Activated CD4-positive, alpha-beta memory T cell treated with anti-CD3 and anti-CD28 coated beads, Interleukin-2, amount 10 ng/mL, durations not matched to agents 7 days and 5 days (primary cell): ENCODE measurements at regions of chr10 and their contacts with region 1.

Region 1: DNA sequence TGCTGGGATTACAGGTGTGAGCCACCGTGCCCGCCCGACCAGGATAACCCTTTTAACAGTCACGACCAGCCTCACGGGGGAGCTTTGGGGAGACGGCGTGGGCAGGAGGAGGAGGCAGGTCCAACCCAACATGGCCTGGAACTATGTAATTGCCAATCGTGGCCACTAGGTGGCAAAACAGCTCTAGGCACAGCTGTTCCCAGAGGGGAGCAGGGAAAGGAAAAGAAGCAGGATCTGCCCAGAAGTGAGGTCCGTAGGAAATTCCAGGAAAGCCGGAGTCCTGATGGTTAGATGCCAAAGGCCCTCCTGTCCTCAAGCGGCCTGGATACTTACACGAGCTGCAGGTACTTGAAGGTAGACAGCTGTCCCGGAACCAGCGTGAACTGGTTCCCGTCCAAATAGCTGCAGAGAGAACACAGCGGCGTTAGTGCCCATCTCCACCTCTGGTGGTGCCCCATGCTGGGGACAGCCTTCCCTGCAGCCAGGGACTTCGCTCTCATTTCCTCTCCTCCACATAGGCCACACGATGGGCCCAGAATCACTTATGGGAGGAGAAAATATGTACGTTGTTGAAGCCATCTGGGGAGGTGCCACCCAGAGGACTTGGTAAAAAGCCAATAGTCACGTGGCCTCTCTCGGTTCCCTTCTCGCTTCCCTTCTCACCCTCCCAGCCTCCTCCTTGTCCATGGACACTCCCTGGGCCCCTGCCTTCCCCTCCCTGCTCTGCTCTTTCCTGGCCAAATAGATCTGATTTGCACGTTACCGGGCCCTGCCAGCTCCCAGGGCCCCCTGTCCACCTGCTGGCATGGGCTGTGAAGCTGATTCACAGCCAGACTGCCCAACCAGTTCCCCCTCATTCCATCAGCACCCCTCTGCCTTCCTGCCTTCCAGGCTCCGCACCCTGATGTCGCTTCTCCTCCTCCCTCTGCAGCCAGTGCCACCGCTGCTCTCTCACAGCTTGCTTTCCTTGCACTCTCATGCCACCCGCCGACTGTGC is 148.1 kb downstream of the SLIT1 start:
- DNase-seq: peak; percentile 66
- H3K4me3 Mint-ChIP-seq: peak overlapping the region; percentile 29
- H3K27ac Mint-ChIP-seq: no peak overlapping the region
- H3K4me1 Mint-ChIP-seq: peaks cover 9% of the 10 kb centered on the region
- H3K27me3 Mint-ChIP-seq: peaks cover 6% of the 10 kb centered on the region

Region 2: GRCh38 chr10:96639899-96640298 is 397.8 kb before region 1 on chr10:
- CTCF ChIA-PET with region 1: interaction called, 12 read pairs
- POLR2A ChIA-PET with region 1: no interaction called
- DNase-seq: no peak
- H3K4me3 Mint-ChIP-seq: no peak overlapping the region
- H3K27ac Mint-ChIP-seq: no peak overlapping the region
- H3K4me1 Mint-ChIP-seq: peaks cover 2% of the 10 kb centered on the region
- H3K27me3 Mint-ChIP-seq: no peaks in the 10 kb centered on the region

Region 3: DNA sequence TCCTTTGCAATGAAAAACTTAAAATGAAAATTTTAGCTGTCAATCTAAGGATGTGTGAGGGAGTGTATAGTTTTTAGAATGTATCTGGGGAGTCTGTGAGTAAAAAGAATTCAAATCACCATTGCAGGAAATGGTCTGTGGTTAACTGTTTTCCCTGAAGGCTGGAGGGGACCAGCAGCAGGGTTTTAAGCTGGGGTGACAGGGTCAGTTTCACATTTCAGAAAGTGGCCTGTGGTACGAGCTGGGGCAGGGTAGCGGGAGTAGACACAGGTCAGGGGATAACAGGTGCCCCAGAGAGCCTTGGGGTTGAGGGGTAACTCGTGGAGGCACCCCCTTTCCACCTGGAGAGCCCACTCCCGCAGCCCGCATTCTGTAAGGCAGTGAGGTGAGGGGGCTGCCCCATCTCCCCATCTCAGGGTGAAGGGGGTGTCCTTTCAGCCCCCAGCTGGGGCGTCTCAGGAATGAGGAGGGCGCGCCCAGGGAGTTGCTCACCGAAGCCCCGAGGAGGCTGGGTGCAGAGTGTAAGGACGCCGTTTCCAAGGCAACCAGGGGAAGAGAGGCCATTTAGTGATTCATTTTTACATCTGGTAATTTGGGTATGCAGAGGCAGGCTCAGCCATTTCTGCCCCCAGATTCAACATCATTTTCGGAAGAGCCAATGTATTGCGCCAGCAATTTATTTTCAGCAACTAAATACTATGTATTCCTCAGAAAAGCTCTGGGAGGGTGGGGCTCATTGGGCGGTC is 20.8 kb before region 1 on chr10:
- CTCF ChIA-PET with region 1: interaction called, 12 read pairs
- POLR2A ChIA-PET with region 1: no interaction called
- DNase-seq: peak; percentile 45
- H3K4me3 Mint-ChIP-seq: peak overlapping the region; percentile 55
- H3K27ac Mint-ChIP-seq: peak overlapping the region; percentile 75
- H3K4me1 Mint-ChIP-seq: peaks cover 23% of the 10 kb centered on the region
- H3K27me3 Mint-ChIP-seq: peaks cover 2% of the 10 kb centered on the region

Region 4: DNA sequence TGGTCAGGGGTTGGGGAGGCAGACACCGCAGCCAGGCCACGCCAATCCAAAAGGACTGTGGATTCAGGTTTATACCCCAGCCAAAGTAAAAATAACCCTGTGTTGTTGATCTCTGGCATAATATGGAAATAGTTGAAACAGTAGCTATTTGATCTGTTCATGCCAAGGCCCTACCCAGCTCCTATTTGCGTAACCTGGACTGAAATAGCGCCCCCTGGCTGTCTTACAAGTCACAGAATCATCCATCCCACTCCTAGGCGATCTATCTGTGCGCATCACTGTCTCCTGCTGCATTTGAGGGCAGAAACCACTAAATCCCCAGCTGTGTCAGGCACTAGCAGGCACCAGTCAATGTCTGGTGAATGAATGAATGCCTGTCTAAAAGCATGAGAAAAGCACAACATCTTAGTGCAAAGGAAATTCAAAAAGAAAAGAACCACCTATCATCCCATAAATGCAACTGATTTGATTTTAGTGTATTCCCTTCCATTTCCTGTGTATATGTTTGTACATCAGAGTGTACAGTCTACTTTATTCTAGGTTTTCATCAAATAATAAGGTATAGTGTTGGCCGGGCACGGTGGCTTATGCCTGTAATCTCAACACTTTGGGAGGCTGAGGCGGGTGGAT is 11.9 kb before region 1 on chr10:
- CTCF ChIA-PET with region 1: interaction called, 67 read pairs
- POLR2A ChIA-PET with region 1: no interaction called
- DNase-seq: peak; percentile 61
- H3K4me3 Mint-ChIP-seq: no peak overlapping the region
- H3K27ac Mint-ChIP-seq: no peak overlapping the region
- H3K4me1 Mint-ChIP-seq: peaks cover 6% of the 10 kb centered on the region
- H3K27me3 Mint-ChIP-seq: peaks cover 14% of the 10 kb centered on the region

Region 5: DNA sequence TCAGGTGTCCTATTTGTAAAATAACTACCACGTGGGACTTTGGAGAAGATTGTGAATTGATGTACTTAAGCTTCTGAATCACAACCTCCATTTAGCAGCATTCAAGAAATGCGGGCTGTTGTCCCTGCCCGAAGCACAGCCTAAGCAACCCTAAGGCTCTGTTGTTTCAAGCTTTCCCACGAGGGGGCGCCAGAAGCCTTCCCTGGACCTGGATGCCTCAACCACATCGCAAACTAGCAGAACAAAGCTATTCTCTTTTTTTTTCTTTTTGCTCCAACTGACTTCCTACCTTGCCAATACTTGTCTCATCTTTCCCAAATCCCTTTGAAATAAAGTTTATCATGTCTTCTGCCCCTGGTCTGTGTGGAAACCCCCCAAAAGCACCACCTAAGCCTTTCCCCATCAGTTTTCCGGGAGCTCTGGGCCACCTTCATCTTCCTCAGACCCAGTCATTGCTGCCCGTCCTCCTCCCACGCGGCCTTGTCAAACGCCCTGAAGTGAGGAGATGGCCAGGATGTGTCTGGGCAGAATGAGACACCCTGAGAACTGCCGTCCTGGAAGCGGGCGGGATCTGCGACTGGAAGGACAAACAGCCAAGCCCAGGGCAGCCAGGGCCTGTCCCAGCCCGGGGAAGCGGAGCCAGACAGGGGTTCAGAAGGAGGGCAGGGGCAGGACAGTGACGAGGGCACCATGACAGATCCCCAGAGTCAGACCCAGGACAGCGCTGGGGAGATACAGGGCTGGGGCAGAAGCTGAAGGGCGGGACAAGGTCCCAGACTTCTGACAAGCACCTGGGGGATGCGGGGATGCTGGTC is 35.4 kb after region 1 on chr10:
- CTCF ChIA-PET with region 1: interaction called, 16 read pairs
- POLR2A ChIA-PET with region 1: no interaction called
- DNase-seq: peak; percentile 81
- H3K4me3 Mint-ChIP-seq: no peak overlapping the region
- H3K27ac Mint-ChIP-seq: no peak overlapping the region
- H3K4me1 Mint-ChIP-seq: peaks cover 18% of the 10 kb centered on the region
- H3K27me3 Mint-ChIP-seq: peaks cover 14% of the 10 kb centered on the region

Region 6: DNA sequence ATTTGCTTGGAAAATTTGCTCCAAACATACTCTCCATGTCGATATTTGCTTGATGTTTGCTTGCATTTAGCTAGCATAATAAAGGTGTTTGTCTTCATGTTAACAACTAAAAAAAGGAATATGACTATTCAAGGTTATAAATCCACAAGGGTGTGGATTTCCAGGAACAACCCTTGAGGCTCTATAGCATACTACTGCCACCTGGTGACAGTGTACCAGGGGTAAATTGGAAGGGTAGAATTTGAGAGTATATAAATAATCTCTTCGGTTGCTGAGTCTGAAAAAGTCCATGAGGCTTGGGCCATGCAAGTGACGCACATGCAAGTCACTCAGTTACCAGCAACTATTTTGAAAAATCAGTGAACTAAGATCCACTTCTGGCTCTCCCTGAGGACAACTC is 79.7 kb after region 1 on chr10:
- CTCF ChIA-PET with region 1: no interaction called
- POLR2A ChIA-PET with region 1: no interaction called
- DNase-seq: no peak
- H3K4me3 Mint-ChIP-seq: no peak overlapping the region
- H3K27ac Mint-ChIP-seq: no peak overlapping the region
- H3K4me1 Mint-ChIP-seq: no peaks in the 10 kb centered on the region
- H3K27me3 Mint-ChIP-seq: peaks cover 18% of the 10 kb centered on the region

Region 7: GRCh38 chr10:97210543-97210961 is 172.9 kb after region 1 on chr10:
- CTCF ChIA-PET with region 1: interaction called, 54 read pairs
- POLR2A ChIA-PET with region 1: no interaction called
- DNase-seq: peak; percentile 72
- H3K4me3 Mint-ChIP-seq: no peak overlapping the region
- H3K27ac Mint-ChIP-seq: no peak overlapping the region
- H3K4me1 Mint-ChIP-seq: no peaks in the 10 kb centered on the region
- H3K27me3 Mint-ChIP-seq: no peaks in the 10 kb centered on the region

Region 8: GRCh38 chr10:97234400-97234799 is 196.7 kb after region 1 on chr10:
- CTCF ChIA-PET with region 1: interaction called, 12 read pairs
- POLR2A ChIA-PET with region 1: no interaction called
- DNase-seq: no peak
- H3K4me3 Mint-ChIP-seq: no peak overlapping the region
- H3K27ac Mint-ChIP-seq: no peak overlapping the region
- H3K4me1 Mint-ChIP-seq: peaks cover 9% of the 10 kb centered on the region
- H3K27me3 Mint-ChIP-seq: no peaks in the 10 kb centered on the region

Region 9: GRCh38 chr10:97640174-97640867 is 602.7 kb after region 1 on chr10 and contains the start of gene PI4K2A:
- CTCF ChIA-PET with region 1: no interaction called
- POLR2A ChIA-PET with region 1: no interaction called
- DNase-seq: peak; percentile 99
- H3K4me3 Mint-ChIP-seq: peak within 1 kb of the TSS; percentile 95
- H3K27ac Mint-ChIP-seq: peak within 1 kb of the TSS; percentile 81
- H3K4me1 Mint-ChIP-seq: peaks cover 23% of the 10 kb centered on the region
- H3K27me3 Mint-ChIP-seq: no peaks in the 10 kb centered on the region
- total RNA-seq, gene PI4K2A: 13.3 TPM